Sigmoid colon (tissue), 7 donors: ENCODE measurements at regions of chr18 and their contacts with region 1.

Region 1: DNA sequence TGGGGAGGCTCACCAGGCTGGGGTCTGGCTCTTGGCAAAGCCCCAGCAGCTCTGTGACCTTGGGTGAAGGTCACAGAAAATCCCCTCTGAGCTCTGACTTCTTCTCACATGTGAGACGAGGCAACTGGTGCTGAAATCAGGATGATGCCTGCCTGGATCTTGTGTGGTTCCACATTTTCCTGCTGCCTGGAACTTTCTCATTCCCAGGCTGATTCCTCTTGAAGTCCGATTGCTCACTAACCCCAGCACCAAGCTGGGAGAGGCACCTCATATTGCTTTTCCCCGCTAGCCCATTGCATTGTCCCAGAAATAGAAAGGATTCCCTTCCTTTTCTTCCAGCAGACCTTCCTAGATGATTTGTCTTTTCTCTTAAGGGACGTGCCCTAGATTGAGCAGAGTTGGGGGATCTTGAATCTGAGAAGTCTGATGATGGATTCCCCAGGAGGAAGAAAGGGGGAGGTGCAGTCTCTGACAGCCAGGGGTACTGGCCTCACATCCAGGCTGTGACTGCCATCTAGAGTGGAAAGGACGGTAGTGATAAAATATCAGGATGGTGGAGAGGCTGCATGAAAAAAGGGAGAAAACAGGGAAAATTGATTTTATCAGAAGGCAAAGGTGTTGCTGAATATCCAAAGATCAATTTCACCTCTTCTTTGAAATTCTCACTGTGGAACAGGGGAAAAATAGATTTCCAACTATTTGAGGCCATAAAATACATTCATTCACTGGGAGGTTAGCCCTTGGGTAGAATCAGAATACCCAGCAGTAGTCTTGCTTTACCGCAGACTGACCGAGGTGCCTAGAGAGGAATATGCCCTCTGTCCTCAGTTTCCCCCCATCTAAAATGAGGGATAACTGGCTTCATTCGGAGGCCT is 96.3 kb downstream of the FAM210A start:
- DNase-seq: peak; percentile 80
- H3K4me3 ChIP-seq: no peak overlapping the region
- H3K27ac ChIP-seq: peak overlapping the region in 3 of 4 donors; percentile 21 to 57 (median 36)
- H3K4me1 ChIP-seq: peaks cover 0 to 7% (median 5%) of the 10 kb centered on the region in 4 donors
- H3K27me3 ChIP-seq: no peaks in the 10 kb centered on the region
- CTCF ChIP-seq: peak; percentile 78 to 95 (median 90)
- EP300 ChIP-seq: no peak
- POLR2A ChIP-seq: no peak

Region 2: GRCh38 chr18:13112982-13113381 is 517.1 kb before region 1 on chr18:
- intact Hi-C with region 1: loop called (anchors 5 kb)
- DNase-seq: peak; percentile 81
- H3K4me3 ChIP-seq: no peak overlapping the region
- H3K27ac ChIP-seq: peak overlapping the region in 2 of 4 donors; percentile 35 to 43
- H3K4me1 ChIP-seq: peaks cover 0 to 9% (median 2%) of the 10 kb centered on the region in 4 donors
- H3K27me3 ChIP-seq: no peaks in the 10 kb centered on the region
- CTCF ChIP-seq: peak; percentile 42 to 71 (median 56)
- EP300 ChIP-seq: no peak
- POLR2A ChIP-seq: no peak

Region 3: DNA sequence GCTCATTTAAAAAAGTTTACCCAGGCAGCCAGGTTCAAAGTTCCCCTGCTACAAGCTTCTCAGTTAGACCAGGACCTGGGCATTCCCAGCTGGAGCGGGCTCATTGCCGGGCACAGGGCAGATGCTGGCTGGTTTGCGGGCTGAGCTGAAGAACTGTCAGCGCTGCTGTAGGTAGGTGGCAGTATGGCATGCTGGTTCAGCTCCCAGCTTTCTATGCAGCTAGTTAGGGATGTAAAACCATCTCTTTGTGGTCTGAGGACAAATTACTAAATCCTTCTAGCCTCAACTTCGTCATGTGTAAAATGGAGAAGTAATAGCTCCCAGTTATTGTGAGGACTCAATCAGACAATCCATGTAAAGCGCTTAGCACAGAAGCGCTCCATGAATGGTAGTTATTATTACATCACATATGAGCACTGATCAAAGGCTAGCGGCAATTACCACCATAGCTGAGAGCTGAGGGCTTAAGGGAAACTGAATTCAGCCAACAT is 413.9 kb before region 1 on chr18:
- intact Hi-C with region 1: loop called (anchors 1 kb)
- DNase-seq: peak; percentile 90
- H3K4me3 ChIP-seq: no peak overlapping the region
- H3K27ac ChIP-seq: peak overlapping the region in 3 of 4 donors; percentile 51 to 94 (median 88)
- H3K4me1 ChIP-seq: peaks cover 0 to 37% (median 37%) of the 10 kb centered on the region in 4 donors
- H3K27me3 ChIP-seq: no peaks in the 10 kb centered on the region
- CTCF ChIP-seq: peak; percentile 70 to 79 (median 78)
- EP300 ChIP-seq: no peak
- POLR2A ChIP-seq: no peak

Region 4: DNA sequence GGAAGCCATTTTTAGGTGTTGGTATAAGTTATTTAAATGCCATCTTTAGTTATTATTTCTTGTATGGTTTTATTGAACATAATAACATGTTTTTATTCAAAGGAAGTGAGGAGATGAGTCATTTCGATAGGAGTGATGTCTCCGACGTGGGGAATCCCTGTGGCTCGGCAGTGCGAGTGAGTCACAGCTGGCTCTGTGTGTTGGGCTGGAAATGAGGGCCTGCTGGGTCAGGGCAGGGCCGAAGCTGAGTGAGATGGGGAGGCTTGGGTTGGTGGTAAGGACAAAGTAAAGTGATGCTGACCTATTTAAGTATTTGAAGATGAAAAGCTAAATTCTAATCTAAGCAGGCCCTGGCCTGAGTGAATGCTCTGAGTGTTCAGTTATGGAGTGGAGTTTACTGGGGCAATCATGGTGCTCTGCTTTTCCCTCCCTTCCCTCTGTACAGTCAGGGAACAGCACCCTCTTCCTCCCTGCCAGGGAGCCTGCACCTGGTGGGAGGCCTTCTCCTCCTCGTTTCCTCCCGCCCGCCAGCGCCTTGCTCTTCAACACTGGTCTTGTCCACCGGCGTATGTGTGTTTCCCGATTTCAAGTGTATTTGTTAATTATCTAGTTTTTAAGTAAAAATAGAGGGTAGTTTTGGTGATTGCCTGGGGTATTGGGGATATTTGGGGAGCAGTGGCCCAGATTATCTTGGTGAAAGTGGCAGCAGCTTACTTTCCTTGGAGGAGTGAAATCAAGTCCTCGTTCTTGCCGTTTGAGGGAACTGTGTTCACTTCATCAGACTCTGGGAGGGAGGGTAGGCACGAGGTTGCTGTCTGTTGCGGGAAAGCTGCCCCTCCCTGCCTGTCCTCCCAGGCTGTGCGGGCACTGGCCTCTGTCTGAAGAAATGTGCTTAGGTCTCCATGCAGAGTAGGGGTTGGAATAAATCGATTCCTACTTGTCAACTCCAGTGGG is 254.5 kb before region 1 on chr18:
- intact Hi-C with region 1: loop called (anchors 5 kb)
- DNase-seq: peak; percentile 89
- H3K4me3 ChIP-seq: no peak overlapping the region
- H3K27ac ChIP-seq: peak overlapping the region; percentile 52 to 74 (median 72)
- H3K4me1 ChIP-seq: peaks cover 0 to 56% (median 27%) of the 10 kb centered on the region in 4 donors
- H3K27me3 ChIP-seq: no peaks in the 10 kb centered on the region
- CTCF ChIP-seq: no peak
- EP300 ChIP-seq: no peak
- POLR2A ChIP-seq: no peak

Region 5: DNA sequence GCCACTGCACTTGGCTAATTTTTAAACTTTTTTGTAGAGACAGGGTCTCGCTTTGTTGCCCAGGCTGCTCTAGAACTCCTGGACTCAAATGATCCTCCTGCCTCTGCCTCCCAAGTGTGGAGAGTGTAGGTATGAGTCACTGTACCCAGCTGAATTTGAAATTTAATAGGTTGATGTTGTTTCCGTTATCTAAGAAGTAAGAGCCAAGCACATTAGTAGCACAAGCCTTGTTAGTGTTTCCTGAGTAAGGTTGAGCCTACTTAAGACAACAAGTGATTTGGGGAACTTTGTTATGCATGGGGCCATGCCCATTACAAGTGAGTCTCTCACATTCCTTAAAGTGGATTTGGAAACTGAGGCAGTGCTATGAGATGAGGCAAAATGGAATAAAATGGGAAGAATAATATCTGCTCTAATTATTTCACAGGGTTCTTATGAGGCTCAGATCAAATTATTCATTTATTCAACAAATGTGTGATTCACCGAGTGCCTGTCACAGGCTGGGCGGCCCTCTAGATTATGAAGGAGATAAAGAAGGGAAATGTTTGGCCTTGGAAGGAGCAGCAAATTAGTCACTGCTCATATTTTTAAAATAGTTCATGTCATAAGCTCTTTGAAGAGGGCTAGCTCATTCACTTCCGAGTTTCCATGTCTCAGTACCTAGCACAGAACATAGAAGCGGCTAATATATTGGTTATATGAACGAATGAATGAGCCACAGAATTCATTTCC is 194.3 kb before region 1 on chr18:
- intact Hi-C with region 1: no loop called
- DNase-seq: peak; percentile 62
- H3K4me3 ChIP-seq: no peak overlapping the region
- H3K27ac ChIP-seq: peak overlapping the region in 3 of 4 donors; percentile 39 to 65 (median 49)
- H3K4me1 ChIP-seq: peaks cover 0 to 24% (median 0%) of the 10 kb centered on the region in 4 donors
- H3K27me3 ChIP-seq: no peaks in the 10 kb centered on the region
- CTCF ChIP-seq: no peak
- EP300 ChIP-seq: no peak
- POLR2A ChIP-seq: no peak

Region 6: DNA sequence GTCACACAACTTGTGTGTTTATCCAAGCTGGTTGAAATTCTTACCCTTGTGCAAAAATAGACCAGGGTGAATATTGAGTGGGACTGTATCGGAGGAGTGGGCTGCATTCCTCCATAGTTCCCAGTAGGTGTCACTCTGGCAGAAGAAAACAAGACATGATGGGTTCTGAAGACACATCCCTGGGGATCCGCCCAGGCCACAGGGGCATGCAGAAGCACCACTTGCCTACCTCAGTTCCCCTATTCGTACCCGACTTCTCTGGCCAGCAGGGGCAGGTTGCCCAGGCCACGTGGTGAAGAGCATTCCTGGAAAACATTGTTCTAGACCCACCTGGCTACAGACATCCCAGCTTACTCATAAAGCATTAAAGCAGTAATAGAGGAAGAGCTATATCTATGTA is 72.0 kb before region 1 on chr18:
- intact Hi-C with region 1: loop called (anchors 1 kb)
- DNase-seq: no peak
- H3K4me3 ChIP-seq: no peak overlapping the region
- H3K27ac ChIP-seq: no peak overlapping the region
- H3K4me1 ChIP-seq: peaks cover 0 to 56% (median 43%) of the 10 kb centered on the region in 4 donors
- H3K27me3 ChIP-seq: no peaks in the 10 kb centered on the region
- CTCF ChIP-seq: peak; percentile 17 to 53 (median 36)
- EP300 ChIP-seq: no peak
- POLR2A ChIP-seq: no peak